ENCODE measurements at regions of chr16 and their contacts with region 1.

Region 1: GRCh38 chr16:17467923-17468540 is 2.7 kb downstream of the XYLT1 start:
- H3K4me3 Mint-ChIP-seq: peak overlapping the region; percentile 21
- H3K27ac Mint-ChIP-seq: no peak overlapping the region
- H3K4me1 Mint-ChIP-seq: peaks cover 57% of the 10 kb centered on the region
- H3K27me3 Mint-ChIP-seq: peaks cover 9% of the 10 kb centered on the region

Region 2: GRCh38 chr16:17194190-17194780 is 273.7 kb before region 1 on chr16:
- intact Hi-C with region 1: loop called (anchors 5 kb)
- H3K4me3 Mint-ChIP-seq: no peak overlapping the region
- H3K27ac Mint-ChIP-seq: no peak overlapping the region
- H3K4me1 Mint-ChIP-seq: peaks cover 20% of the 10 kb centered on the region
- H3K27me3 Mint-ChIP-seq: no peaks in the 10 kb centered on the region

Region 3: GRCh38 chr16:17277977-17278381 is 190.1 kb before region 1 on chr16:
- intact Hi-C with region 1: loop called (anchors 10 kb)
- H3K4me3 Mint-ChIP-seq: no peak overlapping the region
- H3K27ac Mint-ChIP-seq: no peak overlapping the region
- H3K4me1 Mint-ChIP-seq: peaks cover 40% of the 10 kb centered on the region
- H3K27me3 Mint-ChIP-seq: no peaks in the 10 kb centered on the region

Region 4: DNA sequence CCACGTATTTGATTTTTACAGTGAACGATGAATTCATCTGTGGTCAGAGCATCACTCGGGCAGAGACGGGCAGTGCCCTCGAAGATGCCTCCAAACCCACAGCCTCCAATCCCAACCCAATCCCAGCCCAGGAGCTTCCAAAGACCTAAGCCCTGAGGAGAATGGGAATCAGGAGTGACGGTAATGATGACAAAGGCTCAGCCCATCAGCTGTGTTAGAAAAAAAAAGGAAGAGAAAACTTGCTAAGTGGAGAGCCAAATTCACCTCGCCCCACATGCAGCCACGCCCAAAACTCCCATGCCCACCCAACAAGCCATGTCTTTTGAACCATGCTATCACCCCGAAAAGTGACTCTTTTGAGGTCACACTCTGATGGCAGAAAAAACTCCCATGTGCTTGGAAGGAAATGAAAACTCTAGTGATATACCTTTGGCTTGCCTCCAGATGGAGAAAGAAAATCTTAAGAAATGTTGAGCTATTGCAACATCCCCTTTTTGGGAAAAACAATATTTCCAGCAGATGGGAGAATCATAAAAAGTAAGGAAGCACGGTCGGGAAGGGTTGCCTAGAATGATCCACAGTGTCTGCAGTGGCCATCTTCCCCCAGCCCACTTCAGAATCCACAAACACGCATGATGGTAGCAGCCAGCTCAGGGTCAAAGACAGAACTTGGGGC is 35.0 kb before region 1 on chr16:
- intact Hi-C with region 1: no loop called
- H3K4me3 Mint-ChIP-seq: no peak overlapping the region
- H3K27ac Mint-ChIP-seq: peak overlapping the region; percentile 33
- H3K4me1 Mint-ChIP-seq: peaks cover 28% of the 10 kb centered on the region
- H3K27me3 Mint-ChIP-seq: no peaks in the 10 kb centered on the region

Region 5: DNA sequence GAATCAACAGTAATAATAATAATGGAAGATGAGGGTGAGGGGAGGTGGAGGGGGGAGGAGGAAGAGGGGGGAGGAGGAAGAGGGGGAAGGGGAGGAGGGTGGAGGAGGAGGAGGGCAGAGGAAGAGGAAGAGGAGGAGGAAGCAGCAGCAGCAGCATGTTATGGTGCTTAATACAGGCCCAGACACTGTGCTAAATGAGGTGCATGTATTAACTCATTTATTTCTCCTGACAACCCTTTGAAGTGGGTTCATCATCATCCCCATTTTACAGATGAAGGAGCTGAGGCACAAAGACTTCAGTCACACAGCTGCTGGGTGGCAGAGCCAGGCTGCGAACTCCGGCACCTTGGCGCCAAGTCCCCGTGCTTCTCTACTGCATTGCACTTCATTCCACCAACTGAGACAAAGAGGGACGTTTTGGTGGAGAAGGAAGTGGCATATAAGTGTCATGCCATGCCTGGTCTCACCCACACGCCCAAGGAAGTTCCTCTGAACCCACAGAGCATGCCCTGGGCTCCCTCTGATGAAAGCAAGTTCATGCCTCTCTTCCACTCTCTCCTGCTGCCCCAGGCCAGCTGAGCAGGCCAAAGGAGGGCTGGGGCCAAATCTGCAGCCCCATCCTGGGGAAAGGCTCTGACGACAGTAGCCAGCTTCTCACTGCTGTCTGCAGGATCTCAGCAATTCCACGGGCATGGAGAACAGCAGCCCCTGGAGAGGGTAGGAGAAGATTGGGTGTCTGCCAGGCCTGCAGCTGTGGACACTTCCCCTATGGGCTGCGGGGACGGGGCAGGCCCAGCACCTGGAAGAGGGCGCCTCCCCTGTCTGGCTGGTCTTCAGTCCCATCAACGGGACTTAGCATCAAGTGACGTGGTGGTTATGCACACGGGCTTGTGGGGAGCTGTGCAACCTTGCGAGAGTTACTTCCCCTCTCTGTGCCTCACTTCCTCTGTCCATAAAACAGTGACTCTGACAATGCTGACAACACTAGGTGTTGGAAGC is 19.1 kb before region 1 on chr16:
- intact Hi-C with region 1: loop called (anchors 2 kb)
- H3K4me3 Mint-ChIP-seq: peak overlapping the region; percentile 37
- H3K27ac Mint-ChIP-seq: peak overlapping the region; percentile 92
- H3K4me1 Mint-ChIP-seq: peaks cover 57% of the 10 kb centered on the region
- H3K27me3 Mint-ChIP-seq: no peaks in the 10 kb centered on the region

Measured in dendritic cell treated with granulocyte-macrophage colony-stimulating factor and Interleukin-4, amounts not matched to agents 40 ng/mL and 50 ng/mL, for 4 days (primary cell).